Panc1 (cell line): ENCODE measurements at regions of chr7 and their contacts with region 1.

Region 1: DNA sequence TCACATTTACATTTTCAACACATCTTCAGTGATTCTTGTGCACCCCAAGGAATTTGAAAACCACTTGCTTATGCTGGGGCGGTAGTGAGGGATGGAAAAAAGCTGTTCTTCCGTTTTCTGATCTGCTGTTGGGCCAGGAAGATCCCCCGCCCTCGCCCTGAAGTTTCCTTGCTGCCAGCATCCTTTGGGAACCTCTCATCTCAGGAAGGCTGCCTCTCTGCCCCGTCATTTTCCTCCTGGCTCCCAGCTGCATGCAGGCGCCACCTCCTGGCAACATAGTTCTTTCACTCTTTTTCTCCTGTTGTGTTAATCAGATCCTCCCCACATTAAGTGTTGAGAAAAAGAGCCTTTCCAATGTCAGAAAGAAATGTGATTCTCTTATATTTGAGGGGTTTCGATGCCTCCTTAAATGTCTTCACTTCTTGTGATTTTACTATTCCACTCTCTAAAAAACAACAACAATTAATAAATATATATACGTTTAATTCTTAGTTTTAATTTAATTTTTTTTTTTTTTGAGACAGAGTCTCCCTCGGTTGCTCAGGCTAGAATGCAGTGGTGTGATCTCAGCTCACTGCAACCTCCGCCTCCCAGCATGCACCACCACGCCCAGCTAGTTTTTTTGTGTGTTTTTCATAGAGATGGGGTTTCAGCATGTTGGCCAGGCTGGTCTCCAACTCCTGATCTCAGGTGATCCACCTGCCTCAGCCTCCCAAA is 122.9 kb downstream of the RALA start:
- DNase-seq: peak; percentile 69
- ATAC-seq: peak; percentile 94
- H3K4me3 ChIP-seq: no peak overlapping the region
- H3K27ac ChIP-seq: no peak overlapping the region
- H3K4me1 ChIP-seq: no peaks in the 10 kb centered on the region
- H3K27me3 ChIP-seq: no peaks in the 10 kb centered on the region
- CTCF ChIP-seq: peak; percentile 96

Region 2: GRCh38 chr7:39580149-39580874 is 165.9 kb before region 1 on chr7:
- CTCF ChIA-PET with region 1: interaction called, 35 read pairs
- POLR2A ChIA-PET with region 1: no interaction called
- in situ Hi-C with region 1: no loop called
- intact Hi-C with region 1: loop called (anchors 1 kb)
- DNase-seq: peak; percentile 86
- ATAC-seq: peak; percentile 97
- H3K4me3 ChIP-seq: no peak overlapping the region
- H3K27ac ChIP-seq: no peak overlapping the region
- H3K4me1 ChIP-seq: no peaks in the 10 kb centered on the region
- H3K27me3 ChIP-seq: no peaks in the 10 kb centered on the region
- CTCF ChIP-seq: peak; percentile 91